Activated naive CD4-positive, alpha-beta T cell treated with anti-CD3 and anti-CD28 coated beads for 36 hours (primary cell): ENCODE measurements at regions of chr6 and their contacts with region 1.

Region 1: DNA sequence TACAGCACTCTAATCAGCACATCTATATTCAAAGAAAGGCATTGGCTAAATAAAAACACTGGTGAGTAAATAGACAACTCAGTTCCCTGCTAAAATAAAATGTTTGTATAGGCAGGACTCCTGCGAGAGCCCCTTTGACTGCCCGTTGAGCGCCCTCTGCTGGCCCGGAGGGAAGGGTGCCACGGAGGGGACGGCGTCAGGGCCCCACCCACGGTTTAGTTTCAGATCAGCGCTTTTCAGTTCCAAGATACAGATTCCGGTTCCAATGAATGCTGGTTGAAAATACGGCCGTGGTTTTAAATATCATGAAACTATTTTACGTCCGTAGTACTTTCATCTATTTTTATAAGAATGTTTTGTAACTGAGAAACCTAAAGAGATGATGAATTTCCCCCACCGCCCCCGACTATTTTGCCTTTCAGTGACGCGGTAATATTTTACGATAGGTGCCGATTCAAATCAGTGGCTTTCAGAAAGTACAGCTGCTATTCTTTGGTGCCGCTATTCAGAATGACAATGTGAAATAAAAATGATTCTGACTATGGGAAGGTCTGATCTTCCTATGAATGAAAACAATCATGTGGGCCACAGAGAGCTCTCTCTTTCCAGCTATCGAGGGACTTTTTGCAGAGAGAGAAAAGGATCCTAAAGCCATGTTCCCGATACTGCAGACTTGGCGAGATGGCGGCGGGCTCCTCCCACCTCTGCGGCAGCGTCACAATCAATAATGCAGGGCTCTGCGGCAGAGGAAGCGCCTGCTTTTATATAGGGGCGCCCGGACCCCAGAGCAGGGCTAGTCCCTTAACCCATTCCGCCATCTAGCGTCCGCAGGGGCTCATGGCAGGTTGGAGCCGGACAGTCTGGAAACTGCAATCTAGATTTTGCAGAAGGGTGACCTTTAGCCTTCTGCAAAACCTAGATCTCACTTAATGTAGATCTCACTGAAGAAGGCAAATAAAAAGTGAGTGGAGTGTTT is 10.6 kb upstream of the CCN6 start:
- DNase-seq: peak; percentile 94
- H3K4me3 Mint-ChIP-seq: peak overlapping the region; percentile 91
- H3K27ac Mint-ChIP-seq: peak overlapping the region; percentile 98
- H3K4me1 Mint-ChIP-seq: peaks cover 39% of the 10 kb centered on the region
- H3K27me3 Mint-ChIP-seq: no peaks in the 10 kb centered on the region

Region 2: GRCh38 chr6:111210194-111210728 is 833.1 kb before region 1 on chr6:
- CTCF ChIA-PET with region 1: no interaction called
- intact Hi-C with region 1: loop called (anchors 1 kb)
- DNase-seq: peak; percentile 22
- H3K4me3 Mint-ChIP-seq: no peak overlapping the region
- H3K27ac Mint-ChIP-seq: no peak overlapping the region
- H3K4me1 Mint-ChIP-seq: no peaks in the 10 kb centered on the region
- H3K27me3 Mint-ChIP-seq: no peaks in the 10 kb centered on the region

Region 3: GRCh38 chr6:111220383-111221031 is 822.8 kb before region 1 on chr6:
- CTCF ChIA-PET with region 1: no interaction called
- intact Hi-C with region 1: no loop called
- DNase-seq: no peak
- H3K4me3 Mint-ChIP-seq: no peak overlapping the region
- H3K27ac Mint-ChIP-seq: no peak overlapping the region
- H3K4me1 Mint-ChIP-seq: no peaks in the 10 kb centered on the region
- H3K27me3 Mint-ChIP-seq: no peaks in the 10 kb centered on the region

Region 4: GRCh38 chr6:111565326-111566221 is 477.7 kb before region 1 on chr6:
- CTCF ChIA-PET with region 1: no interaction called
- intact Hi-C with region 1: loop called (anchors 1 kb)
- DNase-seq: peak; percentile 62
- H3K4me3 Mint-ChIP-seq: no peak overlapping the region
- H3K27ac Mint-ChIP-seq: peak overlapping the region; percentile 64
- H3K4me1 Mint-ChIP-seq: peaks cover 49% of the 10 kb centered on the region
- H3K27me3 Mint-ChIP-seq: no peaks in the 10 kb centered on the region

Region 5: GRCh38 chr6:111764238-111765175 is 278.8 kb before region 1 on chr6:
- CTCF ChIA-PET with region 1: interaction called, 7 read pairs
- intact Hi-C with region 1: loop called (anchors 1 kb)
- DNase-seq: peak; percentile 84
- H3K4me3 Mint-ChIP-seq: peak overlapping the region; percentile 58
- H3K27ac Mint-ChIP-seq: peak overlapping the region; percentile 97
- H3K4me1 Mint-ChIP-seq: peaks cover 98% of the 10 kb centered on the region
- H3K27me3 Mint-ChIP-seq: no peaks in the 10 kb centered on the region

Region 6: DNA sequence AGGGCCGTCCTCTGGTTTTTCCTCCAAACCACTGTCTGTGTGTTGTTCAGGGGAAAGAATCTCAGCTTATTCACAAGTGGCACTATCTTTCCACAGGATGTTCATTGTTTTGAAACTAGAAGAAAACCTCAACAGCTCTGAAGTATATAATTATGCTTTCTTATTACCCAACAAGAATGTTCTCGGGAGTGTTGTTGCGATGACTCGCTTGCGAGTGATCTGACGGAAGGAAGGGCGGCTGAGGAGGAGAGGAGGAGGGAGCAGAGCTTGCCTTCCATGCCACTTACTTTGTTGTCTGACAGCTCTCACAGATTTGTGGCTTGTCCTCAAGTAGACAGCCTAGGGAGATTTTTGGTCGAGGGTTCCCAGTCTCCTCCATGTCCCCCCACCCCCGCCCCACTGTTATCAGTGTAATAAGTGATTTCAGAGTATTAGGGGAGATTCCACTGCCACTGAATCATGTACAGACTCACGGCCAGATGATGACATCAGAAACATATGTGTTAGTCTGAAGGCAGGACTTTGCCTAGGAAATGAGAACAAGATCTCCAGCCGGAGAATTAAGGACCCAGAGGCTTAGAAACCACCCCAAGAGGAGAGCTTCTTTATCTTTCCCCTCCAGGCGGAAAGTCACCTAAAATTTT is 70.1 kb before region 1 on chr6:
- CTCF ChIA-PET with region 1: interaction called, 4 read pairs
- intact Hi-C with region 1: loop called (anchors 1 kb)
- DNase-seq: peak; percentile 84
- H3K4me3 Mint-ChIP-seq: peak overlapping the region; percentile 70
- H3K27ac Mint-ChIP-seq: peak overlapping the region; percentile 96
- H3K4me1 Mint-ChIP-seq: peaks cover 70% of the 10 kb centered on the region
- H3K27me3 Mint-ChIP-seq: no peaks in the 10 kb centered on the region

Region 7: GRCh38 chr6:112029045-112029822 is 14.1 kb before region 1 on chr6:
- CTCF ChIA-PET with region 1: interaction called, 71 read pairs
- intact Hi-C with region 1: loop called (anchors 1 kb)
- DNase-seq: peak; percentile 91
- H3K4me3 Mint-ChIP-seq: no peak overlapping the region
- H3K27ac Mint-ChIP-seq: peak overlapping the region; percentile 90
- H3K4me1 Mint-ChIP-seq: peaks cover 81% of the 10 kb centered on the region
- H3K27me3 Mint-ChIP-seq: no peaks in the 10 kb centered on the region

Region 8: DNA sequence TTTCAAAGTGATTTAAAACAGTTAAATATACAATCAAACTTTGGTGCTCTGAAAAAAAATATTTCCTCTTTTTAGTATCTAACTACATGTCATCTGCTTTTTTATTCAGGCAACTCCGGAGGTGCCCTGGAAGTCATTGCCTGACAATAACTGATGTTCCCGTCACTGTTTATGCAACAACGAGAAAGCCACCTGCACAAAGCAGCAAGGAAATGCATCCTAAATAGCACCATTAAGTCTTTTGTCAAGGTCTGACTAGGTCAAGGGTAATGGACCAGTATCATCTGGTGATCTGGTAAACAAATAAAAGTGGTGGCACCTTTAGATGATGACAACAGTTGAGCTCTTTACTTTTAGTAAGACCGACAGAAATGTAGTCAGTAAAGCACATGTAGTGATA is 57.2 kb after region 1 on chr6:
- CTCF ChIA-PET with region 1: no interaction called
- intact Hi-C with region 1: no loop called
- DNase-seq: no peak
- H3K4me3 Mint-ChIP-seq: no peak overlapping the region
- H3K27ac Mint-ChIP-seq: no peak overlapping the region
- H3K4me1 Mint-ChIP-seq: no peaks in the 10 kb centered on the region
- H3K27me3 Mint-ChIP-seq: no peaks in the 10 kb centered on the region

Region 9: DNA sequence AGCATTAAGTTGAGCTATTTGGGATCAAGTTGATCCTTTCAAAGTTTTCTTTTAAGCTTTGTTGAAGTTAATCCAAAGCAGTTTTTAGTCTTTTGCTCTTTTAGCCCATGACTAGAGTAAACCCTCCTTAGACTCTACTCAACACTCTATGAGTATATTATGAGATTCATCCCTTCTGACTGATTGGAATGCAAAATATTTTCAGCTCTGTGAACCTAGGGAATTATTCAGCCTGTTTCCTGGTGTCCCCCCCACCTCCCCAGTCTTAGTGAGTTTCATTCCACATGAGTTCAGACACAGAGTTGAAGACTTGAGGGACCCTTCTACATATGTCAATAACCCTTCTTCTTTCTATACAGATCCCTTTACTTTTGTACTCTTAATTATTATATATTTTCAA is 717.5 kb after region 1 on chr6:
- CTCF ChIA-PET with region 1: no interaction called
- intact Hi-C with region 1: no loop called
- DNase-seq: no peak
- H3K4me3 Mint-ChIP-seq: no peak overlapping the region
- H3K27ac Mint-ChIP-seq: no peak overlapping the region
- H3K4me1 Mint-ChIP-seq: no peaks in the 10 kb centered on the region
- H3K27me3 Mint-ChIP-seq: no peaks in the 10 kb centered on the region